Heart right ventricle (tissue), 16 donors: ENCODE measurements at regions of chr6 and their contacts with region 1.

Region 1: GRCh38 chr6:33672808-33673207 is 38.7 kb downstream of the UQCC2 start:
- DNase-seq: peak; percentile 81 to 88
- ATAC-seq: peak; percentile 84 to 97 (median 92)
- H3K4me3 ChIP-seq: no peak overlapping the region
- H3K27ac ChIP-seq: no peak overlapping the region
- H3K4me1 ChIP-seq: peaks cover 0 to 14% (median 8%) of the 10 kb centered on the region in 9 donors
- H3K27me3 ChIP-seq: no peaks in the 10 kb centered on the region
- CTCF ChIP-seq: peak; percentile 31 to 79 (median 58)

Region 2: GRCh38 chr6:33633462-33634158 is 39.2 kb before region 1 on chr6:
- intact Hi-C with region 1: loop called in 1 of 10 experiments (anchors 5 kb)
- DNase-seq: peak; percentile 65 to 79
- ATAC-seq: peak; percentile 78 to 89 (median 86)
- H3K4me3 ChIP-seq: peak overlapping the region in 9 of 10 donors; percentile 30 to 55 (median 48)
- H3K27ac ChIP-seq: peak overlapping the region in 8 of 10 donors; percentile 35 to 69 (median 54)
- H3K4me1 ChIP-seq: peaks cover 9 to 30% (median 24%) of the 10 kb centered on the region in 9 donors
- H3K27me3 ChIP-seq: peaks cover 0 to 13% (median 0%) of the 10 kb centered on the region in 7 donors
- CTCF ChIP-seq: no peak

Region 3: DNA sequence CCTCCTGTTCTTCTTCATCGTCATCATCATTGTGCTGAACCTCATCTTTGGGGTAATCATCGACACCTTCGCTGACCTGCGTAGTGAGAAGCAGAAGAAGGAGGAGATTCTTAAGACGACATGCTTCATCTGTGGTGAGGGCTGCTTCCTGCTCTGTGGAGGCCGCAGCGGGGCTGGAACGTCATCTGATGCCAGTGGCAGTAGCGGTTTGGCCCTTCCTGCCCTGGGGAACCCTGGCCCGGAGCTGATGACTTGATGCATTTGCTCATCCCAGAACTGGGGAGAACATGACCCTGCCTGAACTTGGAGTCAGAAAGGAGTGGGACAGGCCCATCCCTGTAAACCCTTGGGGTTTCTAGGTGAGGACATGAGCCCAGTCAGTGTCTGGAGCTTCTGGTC is 20.0 kb after region 1 on chr6:
- intact Hi-C with region 1: loop called in 1 of 10 experiments (anchors 1 kb)
- DNase-seq: peak; percentile 38 to 40
- ATAC-seq: peak in 5 of 8 donors; percentile 3 to 29 (median 15)
- H3K4me3 ChIP-seq: peak overlapping the region in 1 of 10 donors; percentile 10
- H3K27ac ChIP-seq: peak overlapping the region; percentile 49 to 88 (median 79)
- H3K4me1 ChIP-seq: peaks cover 54 to 77% (median 66%) of the 10 kb centered on the region in 9 donors
- H3K27me3 ChIP-seq: no peaks in the 10 kb centered on the region
- CTCF ChIP-seq: no peak

Region 4: GRCh38 chr6:33761922-33762629 is 89.3 kb after region 1 on chr6:
- intact Hi-C with region 1: no loop called
- DNase-seq: peak; percentile 80 to 87
- ATAC-seq: peak; percentile 85 to 95 (median 91)
- H3K4me3 ChIP-seq: peak overlapping the region in 1 of 10 donors; percentile 3
- H3K27ac ChIP-seq: peak overlapping the region; percentile 14 to 82 (median 71)
- H3K4me1 ChIP-seq: peaks cover 2 to 30% (median 19%) of the 10 kb centered on the region in 9 donors
- H3K27me3 ChIP-seq: no peaks in the 10 kb centered on the region
- CTCF ChIP-seq: peak; percentile 44 to 78 (median 66)